Activated T-helper 2 cell treated with anti-CD3 and anti-CD28 coated beads, Interferon-gamma antibody, Interleukin-2, Interleukin-4, amounts not matched to agents 10 μg/mL and 5 μg/mL and 100 μg/mL, durations not matched to agents 14 hours and 24 hours and 36 hours (primary cell): ENCODE measurements at regions of chrX and their contacts with region 1.

Region 1: DNA sequence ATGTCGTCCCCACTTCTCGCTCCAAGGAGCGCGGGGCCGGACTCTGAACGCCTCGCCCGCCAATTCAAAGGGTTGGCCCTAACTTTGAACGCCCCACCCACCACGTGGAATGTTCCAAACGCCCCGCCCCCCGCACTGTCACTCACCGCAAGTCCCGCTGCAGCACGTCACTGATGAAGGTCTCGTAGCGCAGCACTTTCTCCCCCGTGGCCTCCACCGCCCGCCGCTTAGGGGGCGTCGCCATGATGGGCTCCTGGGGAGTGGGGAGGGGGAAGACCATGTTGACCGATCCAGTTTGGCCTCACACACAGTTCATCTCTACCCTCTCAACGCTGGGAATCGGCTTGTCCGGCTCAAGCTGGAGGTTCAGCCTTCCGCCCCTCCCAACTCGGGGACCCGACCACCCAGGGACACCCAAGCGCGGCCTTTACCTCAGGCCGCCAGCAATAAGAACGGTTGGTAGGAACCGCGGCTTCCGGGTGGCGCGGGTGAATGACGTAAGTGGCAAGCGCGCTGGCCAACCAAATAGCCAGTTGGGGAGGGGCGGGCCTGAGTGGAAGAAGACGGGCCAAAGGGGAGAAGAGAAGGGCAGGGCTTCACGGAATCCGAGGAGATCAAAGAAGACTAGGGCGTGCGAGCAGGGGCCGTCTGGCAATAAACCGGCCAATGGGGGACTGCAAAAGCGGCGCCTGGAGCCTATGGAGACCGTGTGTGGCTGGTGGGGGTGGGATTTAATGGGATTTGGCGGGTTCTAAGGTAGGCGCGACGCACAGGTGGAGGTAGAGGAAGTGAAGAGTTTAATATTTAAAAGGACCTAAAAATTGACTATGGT is at the start of gene UXT:
- DNase-seq: peak; percentile 91
- H3K4me3 Mint-ChIP-seq: peak within 1 kb of the TSS; percentile 87
- H3K27ac Mint-ChIP-seq: peak within 1 kb of the TSS; percentile 97
- H3K4me1 Mint-ChIP-seq: peaks cover 41% of the 10 kb centered on the region
- H3K27me3 Mint-ChIP-seq: no peaks in the 10 kb centered on the region
- total RNA-seq, gene UXT: 204 and 208 TPM in 2 replicates

Region 2: GRCh38 chrX:47581731-47582647 is 76.9 kb before region 1 on chrX and contains the start of gene TIMP1:
- intact Hi-C with region 1: loop called (anchors 2 kb)
- DNase-seq: peak; percentile 78
- H3K4me3 Mint-ChIP-seq: peak within 1 kb of the TSS; percentile 64
- H3K27ac Mint-ChIP-seq: peak within 1 kb of the TSS; percentile 56
- H3K4me1 Mint-ChIP-seq: peaks cover 34% of the 10 kb centered on the region
- H3K27me3 Mint-ChIP-seq: no peaks in the 10 kb centered on the region
- total RNA-seq, gene TIMP1: 76.5 and 77.1 TPM in 2 replicates

Region 3: GRCh38 chrX:48937054-48937907 is 1278.4 kb after region 1 on chrX:
- intact Hi-C with region 1: loop called (anchors 5 kb)
- DNase-seq: peak; percentile 87
- H3K4me3 Mint-ChIP-seq: peak overlapping the region; percentile 71
- H3K27ac Mint-ChIP-seq: peak overlapping the region; percentile 99
- H3K4me1 Mint-ChIP-seq: peaks cover 71% of the 10 kb centered on the region
- H3K27me3 Mint-ChIP-seq: no peaks in the 10 kb centered on the region